Activated B cell treated with CpG ODN at 0.5 μM for 24 hours (primary cell): ENCODE measurements at regions of chr10 and their contacts with region 1.

Region 1: GRCh38 chr10:128064108-128064969 is 61.9 kb downstream of the MKI67 start:
- DNase-seq: peak; percentile 68
- ATAC-seq: peak; percentile 76
- H3K4me3 Mint-ChIP-seq: peak overlapping the region; percentile 57
- H3K27ac Mint-ChIP-seq: peak overlapping the region; percentile 86
- H3K4me1 Mint-ChIP-seq: peaks cover 71% of the 10 kb centered on the region
- H3K27me3 Mint-ChIP-seq: no peaks in the 10 kb centered on the region
- CTCF ChIP-seq: no peak

Region 2: DNA sequence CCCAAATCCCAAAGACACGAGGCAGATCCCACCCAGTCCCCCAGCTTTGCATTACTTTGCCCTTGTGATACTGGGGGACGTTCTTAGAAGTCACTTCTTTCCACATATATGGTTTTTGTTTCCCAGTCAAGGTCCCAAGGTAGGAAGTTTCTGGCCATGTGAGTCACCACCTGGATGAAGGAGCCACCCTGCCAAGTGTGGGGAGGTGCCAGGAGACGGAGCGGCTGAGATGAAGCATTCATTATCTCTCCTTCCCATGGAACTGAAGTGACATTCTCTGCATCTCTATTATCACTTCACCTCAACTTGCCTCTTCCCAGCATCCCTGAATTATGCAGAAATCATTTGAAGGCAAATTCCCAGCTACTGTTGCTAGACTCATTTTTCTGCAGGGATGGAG is 731.7 kb before region 1 on chr10:
- CTCF ChIA-PET with region 1: no interaction called
- POLR2A ChIA-PET with region 1: no interaction called
- intact Hi-C with region 1: no loop called
- DNase-seq: no peak
- ATAC-seq: no peak
- H3K4me3 Mint-ChIP-seq: no peak overlapping the region
- H3K27ac Mint-ChIP-seq: no peak overlapping the region
- H3K4me1 Mint-ChIP-seq: no peaks in the 10 kb centered on the region
- H3K27me3 Mint-ChIP-seq: no peaks in the 10 kb centered on the region
- CTCF ChIP-seq: no peak

Region 3: DNA sequence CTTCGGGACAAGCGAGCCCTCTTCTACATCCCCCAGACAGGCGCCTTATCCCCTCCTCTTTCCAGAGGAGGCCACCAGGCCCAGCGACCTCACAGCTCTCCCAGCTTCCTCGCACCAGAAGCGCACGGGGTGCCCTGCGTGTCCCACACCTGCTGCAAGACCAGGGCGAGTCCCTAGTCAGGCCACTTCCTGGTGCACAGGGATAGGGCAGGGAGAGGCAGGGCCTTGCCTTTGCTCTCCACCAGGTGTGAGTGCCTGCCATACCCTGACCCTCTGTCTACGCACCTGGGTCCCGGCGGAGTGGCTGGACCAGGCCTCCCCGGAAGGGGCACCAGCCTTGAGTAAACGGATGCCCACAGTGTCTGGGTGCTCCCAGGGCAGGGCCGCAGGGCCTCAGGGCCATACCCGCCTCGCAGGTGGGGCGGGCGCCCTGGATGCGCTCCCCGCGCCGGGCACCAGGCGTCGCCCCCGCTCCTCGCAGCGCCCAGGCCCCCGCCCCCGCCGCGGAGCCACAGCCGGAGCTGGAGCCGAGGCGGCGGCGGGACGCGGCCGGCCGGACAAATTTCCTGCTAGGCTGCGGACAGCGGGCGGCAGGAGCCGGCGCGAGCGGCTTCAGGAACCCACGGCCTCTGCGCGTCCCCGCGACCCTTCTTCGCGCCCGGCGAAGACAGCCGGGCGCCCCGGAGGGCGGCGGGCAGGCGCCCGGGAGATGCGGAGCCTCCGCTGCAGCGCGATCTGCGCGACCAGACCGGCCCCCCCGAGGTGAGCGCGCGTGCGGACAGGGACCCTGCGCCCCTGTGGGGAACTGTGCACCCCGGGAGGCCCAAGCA is 157.6 kb before region 1 on chr10 and contains the start of gene PTPRE:
- CTCF ChIA-PET with region 1: interaction called, 36 read pairs
- POLR2A ChIA-PET with region 1: no interaction called
- intact Hi-C with region 1: loop called (anchors 1 kb)
- DNase-seq: peak; percentile 71
- ATAC-seq: peak; percentile 98
- H3K4me3 Mint-ChIP-seq: peak within 1 kb of the TSS; percentile 29
- H3K27ac Mint-ChIP-seq: no peak within 1 kb of the TSS
- H3K4me1 Mint-ChIP-seq: no peaks in the 10 kb centered on the region
- H3K27me3 Mint-ChIP-seq: peaks cover 47% of the 10 kb centered on the region
- CTCF ChIP-seq: no peak
- total RNA-seq, gene PTPRE: 28.2 and 36.8 TPM in 2 replicates

Region 4: DNA sequence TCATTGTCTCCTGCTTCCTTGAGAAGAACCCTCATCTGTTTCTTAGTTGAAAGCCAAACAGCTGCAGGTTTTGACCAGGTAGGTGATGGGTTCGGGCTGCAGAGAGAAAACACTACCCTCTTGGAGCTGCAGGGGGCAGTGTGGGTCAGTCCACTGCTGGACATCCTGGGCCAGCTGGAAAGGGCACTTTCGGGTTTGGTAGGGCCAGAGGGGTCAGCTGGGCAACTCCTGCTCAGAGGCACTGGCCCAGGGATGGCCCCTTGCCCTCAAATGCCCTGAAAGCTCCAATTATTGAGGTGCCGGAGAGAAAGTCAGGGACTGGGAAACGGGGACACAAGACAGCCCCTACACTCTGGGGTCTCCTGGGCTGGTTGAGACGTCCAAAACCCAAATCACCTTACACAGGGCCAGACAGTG is 28.8 kb before region 1 on chr10:
- CTCF ChIA-PET with region 1: interaction called, 196 read pairs
- POLR2A ChIA-PET with region 1: interaction called, 16 read pairs
- intact Hi-C with region 1: loop called (anchors 1 kb)
- DNase-seq: peak; percentile 50
- ATAC-seq: peak; percentile 81
- H3K4me3 Mint-ChIP-seq: no peak overlapping the region
- H3K27ac Mint-ChIP-seq: no peak overlapping the region
- H3K4me1 Mint-ChIP-seq: no peaks in the 10 kb centered on the region
- H3K27me3 Mint-ChIP-seq: peaks cover 2% of the 10 kb centered on the region
- CTCF ChIP-seq: peak; percentile 18

Region 5: GRCh38 chr10:128125944-128126764 is 61.8 kb after region 1 on chr10 and contains the start of gene MKI67:
- CTCF ChIA-PET with region 1: interaction called, 5 read pairs
- POLR2A ChIA-PET with region 1: interaction called, 5 read pairs
- intact Hi-C with region 1: loop called (anchors 1 kb)
- DNase-seq: peak; percentile 68
- ATAC-seq: peak; percentile 94
- H3K4me3 Mint-ChIP-seq: peak within 1 kb of the TSS; percentile 86
- H3K27ac Mint-ChIP-seq: peak within 1 kb of the TSS; percentile 87
- H3K4me1 Mint-ChIP-seq: peaks cover 18% of the 10 kb centered on the region
- H3K27me3 Mint-ChIP-seq: peaks cover 22% of the 10 kb centered on the region
- CTCF ChIP-seq: no peak
- total RNA-seq, gene MKI67: 2.2 and 3.5 TPM in 2 replicates

Region 6: DNA sequence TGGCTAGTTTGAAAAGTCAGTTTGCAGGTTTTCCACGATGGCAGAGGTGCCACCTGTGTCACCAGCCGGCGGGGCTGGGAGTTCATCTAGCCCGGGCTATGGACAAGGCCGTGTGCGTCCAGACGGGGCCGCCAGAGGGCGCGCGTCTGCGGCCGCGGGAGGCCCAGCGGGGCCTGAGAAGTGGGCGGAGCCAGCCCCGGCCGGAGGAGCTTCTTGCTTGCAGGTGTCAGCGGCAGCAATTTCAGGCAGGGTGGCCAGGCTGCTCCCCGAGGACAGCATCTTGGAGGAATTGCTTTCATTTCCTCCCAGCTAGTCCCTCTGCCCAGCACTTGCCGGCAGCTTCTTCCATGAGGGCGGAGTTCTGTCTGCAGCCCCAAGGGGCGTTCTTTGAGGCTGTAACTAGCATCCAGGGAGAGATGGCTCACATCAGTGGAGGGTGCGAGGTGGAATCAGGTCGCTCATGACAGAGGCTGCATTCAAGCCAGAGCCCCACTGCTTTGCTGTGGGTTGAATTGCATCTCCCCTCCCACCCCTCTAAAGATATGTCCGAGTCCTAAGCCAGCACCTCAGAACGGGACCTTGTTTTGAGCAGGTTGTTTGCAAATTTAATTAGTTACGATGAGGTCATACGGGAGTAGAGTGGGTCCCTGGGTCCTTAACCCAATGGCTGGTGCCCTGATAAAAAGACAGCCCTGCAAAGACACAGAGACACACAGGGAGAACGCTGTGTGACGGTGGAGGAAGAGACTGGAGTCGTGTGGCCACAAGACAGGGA is 147.8 kb after region 1 on chr10:
- CTCF ChIA-PET with region 1: interaction called, 5 read pairs
- POLR2A ChIA-PET with region 1: interaction called, 3 read pairs
- intact Hi-C with region 1: loop called (anchors 5 kb)
- DNase-seq: peak; percentile 82
- ATAC-seq: peak; percentile 90
- H3K4me3 Mint-ChIP-seq: peak overlapping the region; percentile 80
- H3K27ac Mint-ChIP-seq: peak overlapping the region; percentile 56
- H3K4me1 Mint-ChIP-seq: peaks cover 11% of the 10 kb centered on the region
- H3K27me3 Mint-ChIP-seq: peaks cover 9% of the 10 kb centered on the region
- CTCF ChIP-seq: peak; percentile 74

Region 7: GRCh38 chr10:128254476-128254875 is 190.1 kb after region 1 on chr10:
- CTCF ChIA-PET with region 1: no interaction called
- POLR2A ChIA-PET with region 1: no interaction called
- intact Hi-C with region 1: no loop called
- DNase-seq: no peak
- ATAC-seq: no peak
- H3K4me3 Mint-ChIP-seq: no peak overlapping the region
- H3K27ac Mint-ChIP-seq: no peak overlapping the region
- H3K4me1 Mint-ChIP-seq: no peaks in the 10 kb centered on the region
- H3K27me3 Mint-ChIP-seq: peaks cover 13% of the 10 kb centered on the region
- CTCF ChIP-seq: no peak